WTC11 (cell line): ENCODE measurements at regions of chr17 and their contacts with region 1.

Region 1: GRCh38 chr17:50949989-50950881 is 84.1 kb upstream of the TOB1 start:
- DNase-seq: peak; percentile 80
- ATAC-seq: peak; percentile 79
- H3K4me3 Mint-ChIP-seq: peak overlapping the region; percentile 14; the same call in 1 of the 2 replicates
- H3K27ac Mint-ChIP-seq: peak overlapping the region; percentile 58; the same call in 1 of the 2 replicates
- H3K4me1 Mint-ChIP-seq: peaks cover 64% of the 10 kb centered on the region
- H3K27me3 Mint-ChIP-seq: no peaks in the 10 kb centered on the region
- CTCF ChIP-seq: peak; percentile 53

Region 2: GRCh38 chr17:50793007-50793406 is 157.2 kb before region 1 on chr17:
- CTCF ChIA-PET with region 1: no interaction called
- POLR2A ChIA-PET with region 1: no interaction called
- DNase-seq: no peak
- ATAC-seq: no peak
- H3K4me3 Mint-ChIP-seq: no peak overlapping the region
- H3K27ac Mint-ChIP-seq: no peak overlapping the region
- H3K4me1 Mint-ChIP-seq: peaks cover 14% of the 10 kb centered on the region
- H3K27me3 Mint-ChIP-seq: no peaks in the 10 kb centered on the region
- CTCF ChIP-seq: no peak

Region 3: DNA sequence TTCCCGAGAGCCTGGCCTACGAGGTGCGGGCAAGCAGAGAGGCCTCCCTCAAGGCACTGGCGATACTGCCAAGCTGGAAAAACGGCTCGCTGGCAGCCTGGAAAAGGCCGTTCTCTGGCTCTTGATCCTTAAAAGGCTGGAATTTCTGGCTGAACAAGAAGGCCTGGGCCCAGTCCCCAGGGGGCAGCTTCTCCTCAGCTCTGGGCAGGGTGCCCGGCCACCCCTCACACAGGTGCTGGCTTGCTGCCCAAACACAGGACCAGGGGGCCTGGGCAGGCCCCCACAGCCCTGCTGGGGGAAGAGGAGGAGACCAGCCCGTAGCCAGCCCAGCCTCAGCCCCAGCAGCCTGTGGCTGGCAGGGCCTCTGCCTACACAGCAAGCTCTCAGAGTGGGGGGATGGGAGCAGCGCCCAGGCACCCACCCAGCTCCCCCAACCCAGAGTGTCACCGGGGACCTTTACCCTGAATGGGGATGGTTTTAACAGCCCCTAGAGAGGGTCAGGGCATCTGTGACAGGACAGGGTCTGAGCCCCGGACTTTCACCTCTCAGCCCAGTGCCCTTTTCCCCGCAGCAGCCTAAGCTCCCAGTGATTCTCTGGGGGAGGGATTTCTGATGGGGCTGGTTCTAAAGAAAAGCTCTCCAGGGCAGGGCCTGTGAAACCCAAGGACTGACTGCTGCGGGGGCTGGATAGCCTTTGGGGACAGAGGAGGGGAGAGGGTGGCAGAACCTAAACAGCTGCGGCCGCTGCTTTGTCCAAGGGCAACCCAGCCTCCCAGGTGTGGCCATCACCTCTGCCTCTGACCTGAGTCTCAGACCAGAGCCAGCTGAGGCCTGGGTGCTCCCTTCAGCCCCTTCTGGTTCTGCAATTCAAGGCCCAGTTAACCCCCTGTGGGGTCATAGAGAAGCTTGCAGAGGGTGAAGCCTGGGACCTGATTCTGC is 45.4 kb before region 1 on chr17:
- CTCF ChIA-PET with region 1: interaction called, 15 read pairs
- POLR2A ChIA-PET with region 1: no interaction called
- DNase-seq: no peak
- ATAC-seq: peak; percentile 35
- H3K4me3 Mint-ChIP-seq: no peak overlapping the region
- H3K27ac Mint-ChIP-seq: no peak overlapping the region
- H3K4me1 Mint-ChIP-seq: peaks cover 58% of the 10 kb centered on the region
- H3K27me3 Mint-ChIP-seq: no peaks in the 10 kb centered on the region
- CTCF ChIP-seq: no peak

Region 4: DNA sequence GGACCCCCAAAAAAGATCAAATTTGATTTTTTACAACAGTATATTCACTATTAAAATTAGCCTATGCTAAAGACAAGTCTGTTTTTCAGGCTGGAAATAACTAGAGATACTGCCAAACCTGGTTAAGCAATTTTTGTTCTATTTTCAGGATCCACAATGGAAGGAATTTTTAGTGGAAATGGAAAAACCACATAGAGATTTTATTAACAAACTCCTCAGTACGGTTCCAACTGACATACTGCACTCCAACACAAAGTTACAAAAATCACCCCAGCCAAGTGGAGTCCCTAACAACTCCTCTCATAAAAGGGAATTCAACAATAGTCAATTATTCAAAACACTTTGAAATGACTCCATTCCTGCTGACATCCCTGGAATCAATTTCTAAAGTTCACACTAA is 17.6 kb after region 1 on chr17:
- CTCF ChIA-PET with region 1: no interaction called
- POLR2A ChIA-PET with region 1: no interaction called
- DNase-seq: no peak
- ATAC-seq: no peak
- H3K4me3 Mint-ChIP-seq: no peak overlapping the region
- H3K27ac Mint-ChIP-seq: no peak overlapping the region
- H3K4me1 Mint-ChIP-seq: no peaks in the 10 kb centered on the region
- H3K27me3 Mint-ChIP-seq: no peaks in the 10 kb centered on the region
- CTCF ChIP-seq: no peak

Region 5: DNA sequence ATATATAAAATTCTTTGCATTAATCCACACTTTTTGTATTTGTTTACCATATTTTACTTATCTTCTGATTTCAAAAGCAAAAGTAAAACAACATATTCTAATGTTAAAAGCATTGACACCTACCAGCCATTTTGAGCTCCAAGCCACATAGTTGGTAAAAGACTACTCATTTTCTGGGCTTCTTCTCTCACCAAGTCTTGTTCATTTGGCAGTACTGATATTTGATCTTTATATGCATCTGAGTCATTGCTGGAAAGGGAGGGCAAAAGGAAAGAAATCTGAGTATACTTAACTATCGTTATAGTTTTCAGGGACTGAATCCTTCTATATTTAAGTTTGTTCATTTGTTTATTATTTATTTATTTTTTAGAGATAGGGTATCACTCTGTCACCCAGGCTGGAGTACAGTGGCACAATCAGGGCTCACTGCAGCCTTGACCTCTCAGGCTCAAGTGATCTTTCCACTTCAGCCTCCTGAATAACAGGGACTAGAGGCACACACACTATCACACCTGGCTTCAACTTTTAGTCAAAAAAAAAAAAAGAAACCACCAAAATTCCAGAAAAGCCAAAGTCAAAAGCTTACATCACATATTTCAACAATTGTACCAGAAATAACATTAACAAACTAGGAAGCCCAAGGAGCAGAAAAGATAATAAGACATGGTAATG is 36.9 kb after region 1 on chr17:
- CTCF ChIA-PET with region 1: no interaction called
- POLR2A ChIA-PET with region 1: no interaction called
- DNase-seq: no peak
- ATAC-seq: no peak
- H3K4me3 Mint-ChIP-seq: no peak overlapping the region
- H3K27ac Mint-ChIP-seq: no peak overlapping the region
- H3K4me1 Mint-ChIP-seq: no peaks in the 10 kb centered on the region
- H3K27me3 Mint-ChIP-seq: no peaks in the 10 kb centered on the region
- CTCF ChIP-seq: no peak